AG04450 (cell line): ENCODE measurements at regions of chr17 and their contacts with region 1.

Region 1: DNA sequence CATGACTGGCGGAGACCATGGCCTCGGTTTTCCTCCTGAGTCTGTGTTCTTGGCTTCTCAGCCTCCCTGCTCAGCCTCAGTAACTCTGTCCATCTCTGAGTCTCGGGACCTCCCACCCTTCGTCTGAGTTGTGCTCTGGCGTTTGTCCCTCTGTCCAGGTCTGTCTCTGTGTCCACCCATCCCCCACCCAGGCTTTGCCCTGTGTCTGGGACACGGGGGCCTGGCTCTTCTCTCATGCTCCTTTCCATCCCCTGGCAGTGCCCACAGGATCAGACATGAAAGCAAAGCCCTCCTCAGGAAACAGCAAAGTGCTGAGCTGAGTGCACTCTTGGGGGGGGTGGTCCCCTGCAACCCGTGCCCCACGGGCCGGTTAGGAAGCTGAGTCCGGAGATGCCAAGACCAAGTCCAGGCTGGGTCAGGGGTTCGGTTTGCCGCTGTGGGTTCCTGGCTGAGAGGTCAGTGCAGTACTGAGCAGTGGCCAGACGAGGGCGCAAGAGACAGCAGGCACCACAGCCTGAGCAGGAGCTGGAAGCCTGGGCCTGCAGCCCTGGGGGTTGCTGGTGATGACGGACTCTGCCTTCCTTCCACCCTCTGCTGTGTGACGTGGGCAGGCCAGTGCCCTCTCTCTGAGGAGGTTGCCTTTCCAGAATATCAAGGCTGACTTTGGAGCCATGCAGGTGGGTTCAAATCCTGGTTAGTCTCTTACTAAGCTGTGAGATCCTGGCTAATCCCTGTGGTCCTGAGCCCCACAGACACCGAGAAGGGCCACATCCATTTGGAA is 2.5 kb downstream of the P2RX1 start:
- DNase-seq: peak; percentile 42
- H3K4me3 ChIP-seq: no peak overlapping the region
- H3K27ac ChIP-seq: peak overlapping the region; percentile 31
- H3K27me3 ChIP-seq: peaks cover 9% of the 10 kb centered on the region
- CTCF ChIP-seq: peak; percentile 98

Region 2: GRCh38 chr17:3738562-3739295 is 175.0 kb before region 1 on chr17:
- CTCF ChIA-PET with region 1: interaction called, 23 read pairs
- POLR2A ChIA-PET with region 1: no interaction called
- DNase-seq: no peak
- H3K4me3 ChIP-seq: no peak overlapping the region
- H3K27ac ChIP-seq: no peak overlapping the region
- H3K27me3 ChIP-seq: no peaks in the 10 kb centered on the region
- CTCF ChIP-seq: no peak

Region 3: DNA sequence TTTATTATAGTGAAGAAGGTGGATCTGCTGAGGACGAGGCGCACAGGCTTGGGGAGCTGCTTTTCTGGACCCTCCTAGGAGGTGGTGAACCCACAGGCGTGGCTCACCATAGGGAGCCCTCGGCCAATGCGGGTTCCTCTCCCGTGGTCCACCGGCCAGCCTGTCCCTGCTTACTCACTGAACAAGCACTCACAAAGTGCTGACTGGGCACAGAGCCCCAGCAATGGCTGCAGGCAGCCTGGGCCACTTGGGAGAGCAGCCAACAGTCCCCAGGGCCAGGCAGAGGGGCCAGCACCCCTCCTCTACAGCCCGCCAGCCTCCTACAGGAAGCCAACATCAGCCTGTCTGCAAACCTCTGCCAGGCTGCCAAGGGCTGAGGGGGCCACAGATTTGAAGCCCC is 48.5 kb before region 1 on chr17:
- CTCF ChIA-PET with region 1: interaction called, 10 read pairs
- POLR2A ChIA-PET with region 1: no interaction called
- DNase-seq: no peak
- H3K4me3 ChIP-seq: no peak overlapping the region
- H3K27ac ChIP-seq: no peak overlapping the region
- H3K27me3 ChIP-seq: no peaks in the 10 kb centered on the region
- CTCF ChIP-seq: no peak

Region 4: DNA sequence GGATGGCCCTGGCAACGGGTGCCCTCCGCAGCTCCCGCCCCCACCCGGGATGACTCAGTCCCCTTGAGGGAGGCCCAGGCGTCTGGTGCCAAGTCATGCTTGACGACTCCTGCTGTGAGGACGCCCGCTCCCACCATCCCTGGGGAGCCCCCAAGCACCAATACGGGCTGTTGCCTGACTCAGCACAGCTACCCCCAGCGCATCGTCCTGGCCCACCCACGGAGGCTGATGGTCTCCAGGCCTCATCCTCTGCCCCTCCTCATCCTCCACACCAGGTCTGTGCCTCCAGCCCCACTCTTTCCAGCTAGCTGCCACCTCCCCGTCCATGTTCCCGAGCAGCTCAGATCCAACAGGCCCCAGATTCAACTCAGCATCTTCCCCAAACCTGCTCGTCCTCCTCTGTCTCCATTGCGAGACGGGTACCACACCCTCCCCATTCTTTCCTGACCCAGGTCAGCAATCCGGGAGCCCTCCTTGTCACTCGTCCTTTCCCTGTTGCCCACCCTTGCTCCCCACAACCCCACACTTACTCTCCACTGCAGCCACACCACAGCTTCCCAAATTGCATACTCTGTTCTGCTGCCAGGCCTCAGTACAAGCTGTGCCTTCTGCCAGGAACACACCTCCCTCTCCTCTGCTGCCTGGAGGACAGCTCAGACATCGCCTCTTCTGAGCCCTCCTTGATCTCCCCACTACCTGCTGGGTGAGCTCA is 23.4 kb before region 1 on chr17:
- CTCF ChIA-PET with region 1: interaction called, 12 read pairs
- POLR2A ChIA-PET with region 1: no interaction called
- DNase-seq: peak; percentile 37
- H3K4me3 ChIP-seq: peak overlapping the region; percentile 13; the same call in 1 of the 2 replicates
- H3K27ac ChIP-seq: peak overlapping the region; percentile 81
- H3K27me3 ChIP-seq: no peaks in the 10 kb centered on the region
- CTCF ChIP-seq: no peak

Region 5: DNA sequence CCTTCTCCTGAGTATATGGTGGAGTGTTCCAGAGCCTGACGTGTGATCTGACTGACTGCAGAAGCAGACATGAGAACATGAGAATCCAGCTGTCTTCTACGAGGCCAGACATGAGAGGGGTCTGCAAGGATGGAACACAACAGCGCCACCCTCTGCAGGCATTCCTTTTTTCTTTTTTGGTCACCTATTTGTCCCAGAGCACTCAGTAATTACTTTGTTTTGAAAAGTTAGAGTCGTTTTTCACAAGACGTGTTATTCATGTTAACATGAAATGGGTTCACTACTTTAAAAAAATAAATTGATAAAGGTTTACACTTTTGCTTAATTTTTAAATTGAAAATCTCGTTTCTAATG is 94.3 kb after region 1 on chr17:
- CTCF ChIA-PET with region 1: interaction called, 21 read pairs
- POLR2A ChIA-PET with region 1: no interaction called
- DNase-seq: no peak
- H3K4me3 ChIP-seq: no peak overlapping the region
- H3K27ac ChIP-seq: peak overlapping the region; percentile 65
- H3K27me3 ChIP-seq: no peaks in the 10 kb centered on the region
- CTCF ChIP-seq: peak; percentile 27; the same call in 1 of the 2 replicates

Region 6: DNA sequence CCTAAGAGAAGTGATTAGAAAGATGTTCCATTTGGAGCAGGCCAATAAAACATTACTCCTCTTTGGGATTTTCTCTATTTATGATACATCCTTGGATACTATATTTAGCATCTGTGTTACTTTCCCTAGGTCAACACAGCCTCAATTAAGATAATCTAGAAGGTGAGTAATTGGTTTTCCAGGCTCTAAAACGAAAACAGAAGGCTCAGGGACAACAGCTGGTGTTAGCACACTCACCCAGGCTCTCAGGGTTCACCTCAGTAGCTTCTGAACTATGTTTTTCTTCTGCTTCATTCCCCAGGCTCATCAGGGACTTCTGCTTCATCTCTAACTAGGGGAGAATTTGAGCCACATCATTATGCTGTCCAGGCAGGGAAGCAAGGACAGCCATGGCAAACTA is 152.5 kb after region 1 on chr17:
- CTCF ChIA-PET with region 1: interaction called, 16 read pairs
- POLR2A ChIA-PET with region 1: no interaction called
- DNase-seq: no peak
- H3K4me3 ChIP-seq: no peak overlapping the region
- H3K27ac ChIP-seq: no peak overlapping the region
- H3K27me3 ChIP-seq: no peaks in the 10 kb centered on the region
- CTCF ChIP-seq: no peak

Region 7: DNA sequence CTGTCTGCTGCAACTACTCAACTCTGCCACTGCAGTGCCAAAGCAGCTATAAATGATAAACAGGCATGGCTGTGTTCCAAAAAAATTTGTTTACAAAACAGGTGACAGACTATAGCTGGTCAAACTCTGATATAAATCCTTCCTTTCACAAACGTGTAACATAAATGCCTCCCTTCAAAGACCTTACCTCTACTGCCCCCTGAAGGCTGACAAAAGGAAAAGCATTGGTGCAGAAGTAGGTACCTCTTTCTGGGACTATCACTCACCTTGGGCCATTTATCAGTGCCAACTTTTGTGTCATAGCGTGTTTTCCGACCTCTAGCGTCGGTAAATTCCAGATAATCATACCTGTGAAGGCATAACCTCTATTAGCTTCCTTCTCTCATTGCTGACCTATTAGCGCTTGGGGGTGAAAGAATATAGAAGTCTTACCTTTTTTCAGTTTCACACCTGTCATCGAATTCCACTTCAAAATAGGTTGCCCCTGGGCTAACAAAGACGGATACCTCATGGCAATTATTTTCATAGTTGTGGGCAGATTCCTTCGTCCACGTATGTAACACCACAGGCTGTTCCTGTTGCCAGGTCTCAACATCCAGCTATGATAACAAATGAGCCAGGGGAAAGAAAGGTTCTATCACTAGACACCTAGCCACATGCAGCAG is 161.2 kb after region 1 on chr17:
- CTCF ChIA-PET with region 1: interaction called, 68 read pairs
- POLR2A ChIA-PET with region 1: no interaction called
- DNase-seq: peak; percentile 7
- H3K4me3 ChIP-seq: no peak overlapping the region
- H3K27ac ChIP-seq: no peak overlapping the region
- H3K27me3 ChIP-seq: no peaks in the 10 kb centered on the region
- CTCF ChIP-seq: peak; percentile 78